ENCODE measurements at regions of chr12 and their contacts with region 1.

Region 1: DNA sequence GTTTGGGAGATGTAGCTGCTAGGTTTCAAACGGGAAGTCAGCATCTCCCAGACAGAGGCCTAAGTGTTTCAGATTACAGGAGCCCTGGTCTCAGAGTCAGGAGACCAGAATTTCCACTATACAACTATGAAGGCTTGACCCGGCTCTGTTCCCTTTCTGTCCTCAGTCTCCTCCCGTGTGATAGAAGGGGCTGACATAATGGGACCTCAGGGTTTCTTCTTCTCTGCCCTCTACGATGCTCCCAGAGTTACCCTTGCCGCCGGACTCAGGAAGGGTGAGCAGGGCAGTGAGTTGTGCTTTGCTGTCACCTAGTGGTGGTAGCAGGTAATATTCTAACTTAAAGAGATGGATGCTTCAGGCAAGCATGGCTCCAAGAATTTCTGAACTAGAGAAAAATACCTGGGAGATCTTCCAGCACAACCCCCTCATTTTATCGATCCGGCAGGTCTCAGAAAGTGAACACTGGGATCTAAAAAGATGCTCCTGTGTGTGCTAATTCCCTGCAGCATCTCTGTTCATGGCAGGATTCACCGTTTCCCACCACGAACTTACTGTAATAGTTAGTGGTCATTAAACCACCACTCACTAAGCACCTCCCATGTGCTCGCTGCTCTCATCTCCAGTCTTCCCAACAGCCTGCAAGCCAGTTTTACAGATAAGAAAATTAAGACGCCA is 84.4 kb downstream of the VWF start:
- DNase-seq: peak; percentile 72 to 79
- ATAC-seq: peak; percentile 75 to 87
- H3K4me3 ChIP-seq: no peak overlapping the region
- H3K27ac ChIP-seq: no peak overlapping the region
- H3K4me1 ChIP-seq: peaks cover 7% of the 10 kb centered on the region; the same call in 2 of the 3 replicates
- CTCF ChIP-seq: peak; percentile 90
- EP300 ChIP-seq: no peak
- POLR2A ChIP-seq: no peak
- RAD21 ChIP-seq: peak; percentile 91 to 96

Region 2: DNA sequence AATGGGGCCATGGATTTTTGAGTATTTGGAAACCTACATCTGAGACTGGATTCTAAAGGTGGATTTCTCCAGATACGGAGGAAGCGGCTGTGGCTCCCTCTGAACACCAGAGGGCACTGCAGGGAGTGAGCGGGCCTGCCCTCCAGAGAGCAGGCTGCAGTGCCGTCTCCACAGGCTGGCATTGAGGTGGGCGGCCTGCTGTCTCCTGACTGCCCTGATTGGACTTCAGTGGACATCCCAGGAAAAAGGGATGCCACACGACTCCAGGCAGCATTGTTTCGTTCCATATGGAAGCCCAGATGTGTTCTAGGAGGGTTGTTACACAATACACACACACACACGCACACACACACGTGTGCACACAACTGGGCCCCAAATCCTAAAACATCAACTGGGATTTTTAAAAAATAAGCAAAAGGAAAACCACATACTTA is 74.1 kb before region 1 on chr12:
- CTCF ChIA-PET with region 1: interaction called, 52 read pairs
- POLR2A ChIA-PET with region 1: no interaction called
- DNase-seq: peak; percentile 63 to 66
- ATAC-seq: peak; percentile 94 to 98
- H3K4me3 ChIP-seq: no peak overlapping the region
- H3K27ac ChIP-seq: no peak overlapping the region
- H3K4me1 ChIP-seq: no peaks in the 10 kb centered on the region
- CTCF ChIP-seq: peak; percentile 74
- EP300 ChIP-seq: no peak
- POLR2A ChIP-seq: no peak
- RAD21 ChIP-seq: peak; percentile 33 to 49; a peak in 3 of 5 replicates

Region 3: DNA sequence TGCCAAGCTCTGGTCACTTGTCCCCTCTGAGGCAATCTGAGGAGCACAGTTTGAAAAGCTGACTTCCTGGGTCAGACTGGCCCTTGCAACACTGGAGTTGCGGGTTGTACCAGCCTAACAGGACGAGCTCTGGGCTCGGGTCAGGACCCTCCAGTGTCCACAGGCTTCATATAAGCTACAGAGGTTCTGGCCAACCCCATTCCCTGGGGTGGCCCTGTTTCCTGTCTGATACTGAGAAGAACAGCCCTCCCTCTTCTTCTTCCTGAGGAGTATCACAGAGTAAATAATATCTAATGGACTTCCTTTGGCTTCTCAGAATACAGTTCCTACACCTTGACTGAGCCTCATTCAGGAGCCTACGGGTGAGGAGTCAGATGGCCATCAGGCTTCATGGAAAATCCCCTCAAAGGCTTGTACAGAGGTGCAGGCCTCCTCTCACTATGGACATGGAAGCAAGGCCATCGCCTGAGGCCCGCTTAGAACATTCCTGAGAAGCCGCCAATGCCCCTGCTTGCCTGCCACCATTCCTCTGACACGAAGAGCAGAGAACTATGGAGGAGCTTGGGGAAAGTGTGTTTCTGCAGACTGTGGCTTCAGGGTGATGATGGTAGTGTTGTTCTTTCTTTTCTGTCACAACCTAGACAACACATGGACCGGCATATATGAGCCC is 66.4 kb before region 1 on chr12:
- CTCF ChIA-PET with region 1: interaction called, 32 read pairs
- POLR2A ChIA-PET with region 1: no interaction called
- DNase-seq: no peak
- ATAC-seq: no peak
- H3K4me3 ChIP-seq: no peak overlapping the region
- H3K27ac ChIP-seq: no peak overlapping the region
- H3K4me1 ChIP-seq: no peaks in the 10 kb centered on the region
- CTCF ChIP-seq: no peak
- EP300 ChIP-seq: no peak
- POLR2A ChIP-seq: no peak
- RAD21 ChIP-seq: no peak

Region 4: DNA sequence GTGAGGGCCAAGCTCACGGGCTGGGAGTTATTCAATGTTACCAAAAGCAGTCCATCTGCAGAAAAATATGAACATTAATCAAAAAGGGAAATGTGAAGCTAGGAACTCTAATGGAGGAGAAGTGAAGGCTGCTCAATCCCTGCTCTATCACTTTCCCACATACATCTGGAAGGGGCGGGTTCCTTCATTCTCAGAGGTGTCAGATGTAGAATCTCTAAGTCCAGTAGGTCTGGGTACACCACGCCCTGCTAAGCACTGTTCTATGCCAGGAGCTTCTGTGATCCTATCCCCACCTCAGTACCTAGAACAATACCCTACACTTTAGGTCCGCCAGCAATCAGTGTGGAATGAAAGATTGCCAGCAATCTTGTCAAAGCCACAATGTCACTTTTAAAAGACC is 57.9 kb before region 1 on chr12:
- CTCF ChIA-PET with region 1: interaction called, 32 read pairs
- POLR2A ChIA-PET with region 1: no interaction called
- DNase-seq: no peak
- ATAC-seq: no peak
- H3K4me3 ChIP-seq: no peak overlapping the region
- H3K27ac ChIP-seq: no peak overlapping the region
- H3K4me1 ChIP-seq: no peaks in the 10 kb centered on the region
- CTCF ChIP-seq: no peak
- EP300 ChIP-seq: no peak
- POLR2A ChIP-seq: no peak
- RAD21 ChIP-seq: no peak

Region 5: GRCh38 chr12:5996459-5996858 is 43.6 kb before region 1 on chr12:
- CTCF ChIA-PET with region 1: interaction called, 361 read pairs
- POLR2A ChIA-PET with region 1: no interaction called
- DNase-seq: no peak
- ATAC-seq: no peak
- H3K4me3 ChIP-seq: no peak overlapping the region
- H3K27ac ChIP-seq: no peak overlapping the region
- H3K4me1 ChIP-seq: no peaks in the 10 kb centered on the region
- CTCF ChIP-seq: no peak
- EP300 ChIP-seq: no peak
- POLR2A ChIP-seq: no peak
- RAD21 ChIP-seq: no peak

Measured in A549 (cell line).